ENCODE measurements at regions of chr7 and their contacts with region 1.

Region 1: DNA sequence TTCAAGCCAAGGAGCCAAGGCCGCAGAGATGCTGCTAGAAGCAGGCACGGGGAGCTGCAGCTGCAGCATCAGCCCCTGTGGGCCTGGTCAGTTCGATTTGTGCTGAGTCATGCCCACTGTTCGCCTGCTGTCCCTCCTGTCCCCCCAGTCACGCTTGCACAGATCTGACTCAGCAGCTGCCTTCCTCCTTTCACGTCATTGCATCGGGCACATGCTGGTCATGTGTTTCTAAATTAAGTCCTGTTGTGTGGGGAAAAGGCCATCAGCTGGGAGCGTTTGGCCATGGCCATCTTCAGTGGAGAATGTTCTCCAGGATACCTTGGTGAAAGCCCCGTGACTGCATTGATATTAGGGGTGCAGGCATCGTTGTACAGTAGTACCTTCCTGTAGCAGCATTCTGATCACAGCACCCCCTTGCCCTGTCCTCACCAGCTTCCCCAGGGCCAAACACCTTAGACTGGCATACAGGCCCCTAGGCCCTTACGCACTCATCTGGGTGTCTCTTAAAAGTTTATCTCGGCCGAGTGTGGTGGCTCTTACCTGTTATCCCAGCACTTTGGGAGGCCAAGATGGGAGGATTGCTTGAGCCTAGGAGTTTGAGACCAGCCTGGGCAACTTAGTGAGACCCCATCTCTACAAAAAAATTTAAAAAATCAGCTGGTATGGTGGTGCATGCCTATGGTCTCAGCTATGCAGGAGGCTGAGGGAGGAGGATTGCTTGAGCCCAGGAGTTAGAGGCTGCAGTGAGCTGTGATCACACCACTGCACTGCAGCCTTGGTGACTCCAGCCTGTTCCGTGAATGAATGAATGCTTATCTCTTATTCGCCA is 23.2 kb downstream of the POR start:
- DNase-seq: peak in 1 of 2 experiments; percentile 68
- H3K4me3 ChIP-seq: no peak overlapping the region
- H3K27ac ChIP-seq: peak overlapping the region; percentile 58
- H3K4me1 ChIP-seq: peaks cover 12% of the 10 kb centered on the region
- H3K27me3 ChIP-seq: no peaks in the 10 kb centered on the region
- CTCF ChIP-seq: no peak

Region 2: GRCh38 chr7:75925717-75926435 is 12.3 kb before region 1 on chr7:
- CTCF ChIA-PET with region 1: interaction called, 12 read pairs
- POLR2A ChIA-PET with region 1: no interaction called
- intact Hi-C with region 1: no loop called
- DNase-seq: no peak
- H3K4me3 ChIP-seq: no peak overlapping the region
- H3K27ac ChIP-seq: no peak overlapping the region
- H3K4me1 ChIP-seq: no peaks in the 10 kb centered on the region
- H3K27me3 ChIP-seq: no peaks in the 10 kb centered on the region
- CTCF ChIP-seq: no peak

Region 3: GRCh38 chr7:76031964-76032363 is 93.8 kb after region 1 on chr7:
- CTCF ChIA-PET with region 1: no interaction called
- POLR2A ChIA-PET with region 1: interaction called, 19 read pairs
- intact Hi-C with region 1: no loop called
- DNase-seq: no peak
- H3K4me3 ChIP-seq: no peak overlapping the region
- H3K27ac ChIP-seq: no peak overlapping the region
- H3K4me1 ChIP-seq: no peaks in the 10 kb centered on the region
- H3K27me3 ChIP-seq: no peaks in the 10 kb centered on the region
- CTCF ChIP-seq: no peak